Head of caudate nucleus (tissue), 42 donors: ENCODE measurements at regions of chr2 and their contacts with region 1.

Region 1: DNA sequence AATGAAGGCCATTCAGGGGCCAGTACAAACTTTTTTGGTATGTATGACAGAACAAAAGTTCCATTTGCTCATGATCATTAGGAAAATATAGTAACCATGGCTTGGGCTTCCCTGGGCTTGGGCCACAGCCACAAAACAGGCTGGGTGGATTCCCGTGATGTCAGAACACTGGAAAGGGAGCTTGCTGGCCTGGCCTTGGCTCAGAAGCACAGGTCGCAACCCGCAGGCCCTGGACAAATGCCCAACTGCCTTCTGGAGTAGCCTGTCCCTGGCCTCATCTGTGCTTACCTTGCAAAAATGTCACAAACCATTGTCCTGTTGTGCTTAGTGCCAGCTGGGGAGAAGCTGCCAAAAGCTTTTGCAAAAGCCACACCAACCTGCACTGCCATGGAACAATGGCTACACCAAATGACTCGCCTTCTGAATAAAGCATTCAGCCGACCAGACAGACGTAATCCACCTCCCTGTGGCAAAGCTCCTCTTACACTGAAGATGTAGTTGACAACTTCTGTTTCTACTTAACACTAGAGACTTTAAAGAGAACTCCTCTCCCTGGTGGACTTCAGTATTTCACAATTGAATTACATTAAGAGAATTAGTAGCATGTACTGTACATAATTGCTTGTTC is 125.5 kb downstream of the ANKRD44 start:
- DNase-seq: peak in 20 of 42 donors; percentile 13 to 68 (median 37)

Region 2: GRCh38 chr2:197113275-197113711 is 71.8 kb before region 1 on chr2:
- intact Hi-C with region 1: no loop called
- DNase-seq: peak in 2 of 42 donors; percentile 34 to 36

Region 3: GRCh38 chr2:197279997-197280746 is 95.1 kb after region 1 on chr2:
- intact Hi-C with region 1: no loop called
- DNase-seq: no peak

Region 4: DNA sequence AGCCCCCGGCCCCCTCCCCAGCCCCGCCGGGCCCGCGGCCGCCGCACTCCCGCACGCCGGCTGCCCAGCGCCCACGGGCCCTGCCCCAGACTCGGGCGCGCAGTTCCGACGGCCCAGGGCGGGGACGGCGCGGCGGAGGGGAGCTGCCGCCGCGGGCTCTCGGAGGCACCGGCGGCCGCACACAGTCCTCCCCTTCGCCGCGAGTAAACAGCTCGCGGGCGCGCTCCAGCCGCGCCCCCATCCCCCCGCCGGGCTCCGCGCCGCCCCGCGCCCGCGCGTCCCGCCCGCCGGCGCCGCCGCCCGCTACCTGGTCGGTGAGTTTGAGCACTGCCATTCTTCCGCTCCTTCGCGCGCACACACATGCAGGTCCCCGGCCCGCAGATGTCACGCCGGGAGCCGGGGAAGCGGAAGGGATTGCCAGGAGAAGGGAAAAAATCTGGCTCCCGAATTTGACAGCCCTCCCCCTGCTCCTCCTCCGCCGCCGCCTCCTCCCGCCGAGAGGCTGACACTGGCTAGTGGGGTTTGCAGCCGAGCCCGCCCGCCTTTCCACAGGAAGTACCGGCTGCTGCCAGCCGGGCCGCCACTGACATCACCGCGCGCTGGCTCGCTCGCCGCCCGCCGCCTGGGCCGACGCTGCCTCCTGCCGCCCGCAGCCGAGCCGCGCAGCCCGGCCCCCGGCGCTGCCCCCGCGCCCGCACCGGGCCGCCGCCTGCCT is 125.4 kb after region 1 on chr2 and contains the start of gene ANKRD44:
- intact Hi-C with region 1: loop called (anchors 5 kb)
- DNase-seq: peak; percentile 73 to 96 (median 90)

Region 5: GRCh38 chr2:197378494-197379307 is 193.6 kb after region 1 on chr2:
- intact Hi-C with region 1: loop called (anchors 10 kb)
- DNase-seq: peak; percentile 9 to 85 (median 63)